Heart left ventricle (tissue), 16 donors: ENCODE measurements at regions of chr17 and their contacts with region 1.

Region 1: DNA sequence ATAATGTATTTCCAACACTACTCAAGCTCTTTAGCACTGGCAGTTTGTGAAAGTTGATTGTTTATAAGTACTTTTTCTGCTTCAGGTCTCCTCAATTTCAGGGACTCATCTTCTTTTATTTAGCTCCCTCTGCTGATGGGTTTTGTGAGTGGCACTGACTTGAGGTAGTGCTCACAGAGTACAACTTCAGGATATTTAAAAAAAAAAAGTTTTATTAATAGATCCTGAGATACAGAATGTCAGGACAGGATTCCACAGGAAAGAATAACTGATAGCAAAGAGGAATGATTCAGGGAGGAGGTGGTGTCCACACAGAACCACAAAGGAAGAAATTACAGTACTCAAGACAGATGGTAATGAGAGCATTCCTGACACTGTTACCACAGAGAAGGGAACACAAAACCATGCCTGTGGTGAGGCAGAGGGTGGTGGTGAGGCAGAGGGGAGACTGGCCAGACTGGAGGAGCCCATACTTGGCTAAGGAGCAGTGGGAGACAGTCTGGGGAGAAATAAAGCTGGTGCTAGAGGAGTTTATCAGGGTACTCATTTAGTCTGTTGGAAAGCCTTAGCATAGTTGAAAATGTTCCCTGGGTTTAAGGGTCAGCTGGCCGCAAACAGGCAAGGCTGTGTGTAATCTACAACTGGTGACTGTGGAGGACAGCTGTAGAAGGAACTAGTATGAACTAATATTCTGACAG is 63.7 kb downstream of the SPAG9 start:
- DNase-seq: no peak
- ATAC-seq: peak; percentile 82 to 87 (median 86)
- H3K4me3 ChIP-seq: peak overlapping the region in 2 of 12 donors; percentile 2 to 16
- H3K27ac ChIP-seq: peak overlapping the region in 11 of 12 donors; percentile 41 to 73 (median 57)
- H3K4me1 ChIP-seq: peaks cover 0 to 26% (median 22%) of the 10 kb centered on the region in 12 donors
- H3K27me3 ChIP-seq: no peaks in the 10 kb centered on the region
- CTCF ChIP-seq: peak; percentile 12 to 76 (median 54)
- POLR2A ChIP-seq: no peak

Region 2: DNA sequence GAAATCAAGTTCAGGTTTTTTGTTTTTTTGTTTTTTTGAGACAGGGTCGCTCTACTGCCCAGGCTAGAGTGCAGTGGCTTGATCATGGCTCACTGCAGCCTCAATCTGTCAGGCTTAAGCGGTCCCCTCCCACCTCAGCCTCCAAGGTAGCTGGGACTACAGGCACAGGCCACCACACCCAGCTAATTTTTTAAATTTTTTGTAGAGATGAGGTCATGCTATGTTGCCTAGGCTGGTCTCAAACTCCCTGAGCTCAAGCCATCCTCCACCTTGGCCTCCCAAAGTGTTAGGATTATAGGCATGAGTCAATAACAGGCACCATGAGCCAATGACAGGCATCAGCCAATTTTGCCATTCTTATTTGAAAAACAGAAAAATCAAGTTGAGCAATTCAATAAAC is 61.3 kb before region 1 on chr17:
- intact Hi-C with region 1: loop called in 6 of 10 experiments (anchors 5 to 10 kb)
- DNase-seq: no peak
- ATAC-seq: no peak
- H3K4me3 ChIP-seq: no peak overlapping the region
- H3K27ac ChIP-seq: no peak overlapping the region
- H3K4me1 ChIP-seq: no peaks in the 10 kb centered on the region
- H3K27me3 ChIP-seq: no peaks in the 10 kb centered on the region
- CTCF ChIP-seq: no peak
- POLR2A ChIP-seq: no peak

Region 3: GRCh38 chr17:51000835-51001638 is 55.9 kb before region 1 on chr17:
- intact Hi-C with region 1: loop called in 7 of 10 experiments (anchors 5 to 10 kb)
- DNase-seq: no peak
- ATAC-seq: peak; percentile 59 to 65 (median 62)
- H3K4me3 ChIP-seq: no peak overlapping the region
- H3K27ac ChIP-seq: no peak overlapping the region
- H3K4me1 ChIP-seq: peaks cover 0 to 7% (median 0%) of the 10 kb centered on the region in 12 donors
- H3K27me3 ChIP-seq: no peaks in the 10 kb centered on the region
- CTCF ChIP-seq: peak; percentile 27 to 72 (median 57)
- POLR2A ChIP-seq: no peak

Region 4: DNA sequence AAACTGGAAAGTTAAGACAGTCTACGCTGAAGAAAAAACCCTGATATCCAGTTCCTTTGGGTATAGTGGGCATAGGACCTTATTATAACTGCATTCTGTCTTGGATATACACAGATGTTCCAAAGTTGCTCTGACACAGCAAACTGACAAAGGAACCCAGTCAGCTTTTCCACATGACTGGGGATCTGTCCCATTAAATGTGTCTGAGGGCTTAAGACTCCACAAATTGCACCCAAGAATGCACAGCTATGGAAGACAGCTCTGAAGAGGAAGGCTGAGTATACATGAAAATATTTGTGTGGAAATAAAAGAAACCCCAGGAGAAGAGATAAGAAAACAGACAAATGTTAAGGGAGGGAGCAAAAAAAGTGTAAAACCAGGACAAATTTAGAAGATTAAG is 50.4 kb before region 1 on chr17:
- intact Hi-C with region 1: loop called in 6 of 10 experiments (anchors 5 to 10 kb)
- DNase-seq: no peak
- ATAC-seq: no peak
- H3K4me3 ChIP-seq: no peak overlapping the region
- H3K27ac ChIP-seq: no peak overlapping the region
- H3K4me1 ChIP-seq: no peaks in the 10 kb centered on the region
- H3K27me3 ChIP-seq: no peaks in the 10 kb centered on the region
- CTCF ChIP-seq: no peak
- POLR2A ChIP-seq: no peak

Region 5: DNA sequence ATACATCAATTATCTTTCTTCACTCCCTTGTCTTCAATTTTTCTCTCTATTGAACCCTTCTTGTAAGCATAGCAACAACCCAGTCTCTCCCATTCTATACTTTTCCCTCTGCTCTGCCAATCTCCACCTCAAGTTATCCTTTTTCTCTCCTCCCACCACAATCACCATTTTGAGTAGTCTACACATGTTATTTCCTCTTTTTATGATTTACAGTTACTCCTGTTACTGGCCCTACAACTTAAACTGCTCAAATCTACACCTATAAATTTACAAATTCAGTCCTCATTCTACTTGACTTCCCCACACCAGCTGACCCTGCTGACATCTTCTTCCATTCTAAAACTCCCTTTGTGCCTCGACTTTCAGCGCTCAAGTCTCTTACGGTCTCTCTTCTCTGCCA is 20.9 kb before region 1 on chr17:
- intact Hi-C with region 1: loop called in 1 of 10 experiments (anchors 2 kb)
- DNase-seq: no peak
- ATAC-seq: no peak
- H3K4me3 ChIP-seq: no peak overlapping the region
- H3K27ac ChIP-seq: peak overlapping the region in 2 of 12 donors; percentile 1 to 24
- H3K4me1 ChIP-seq: peaks cover 0 to 15% (median 10%) of the 10 kb centered on the region in 12 donors
- H3K27me3 ChIP-seq: no peaks in the 10 kb centered on the region
- CTCF ChIP-seq: no peak
- POLR2A ChIP-seq: no peak